ENCODE measurements at regions of chr1 and their contacts with region 1.

Region 1: DNA sequence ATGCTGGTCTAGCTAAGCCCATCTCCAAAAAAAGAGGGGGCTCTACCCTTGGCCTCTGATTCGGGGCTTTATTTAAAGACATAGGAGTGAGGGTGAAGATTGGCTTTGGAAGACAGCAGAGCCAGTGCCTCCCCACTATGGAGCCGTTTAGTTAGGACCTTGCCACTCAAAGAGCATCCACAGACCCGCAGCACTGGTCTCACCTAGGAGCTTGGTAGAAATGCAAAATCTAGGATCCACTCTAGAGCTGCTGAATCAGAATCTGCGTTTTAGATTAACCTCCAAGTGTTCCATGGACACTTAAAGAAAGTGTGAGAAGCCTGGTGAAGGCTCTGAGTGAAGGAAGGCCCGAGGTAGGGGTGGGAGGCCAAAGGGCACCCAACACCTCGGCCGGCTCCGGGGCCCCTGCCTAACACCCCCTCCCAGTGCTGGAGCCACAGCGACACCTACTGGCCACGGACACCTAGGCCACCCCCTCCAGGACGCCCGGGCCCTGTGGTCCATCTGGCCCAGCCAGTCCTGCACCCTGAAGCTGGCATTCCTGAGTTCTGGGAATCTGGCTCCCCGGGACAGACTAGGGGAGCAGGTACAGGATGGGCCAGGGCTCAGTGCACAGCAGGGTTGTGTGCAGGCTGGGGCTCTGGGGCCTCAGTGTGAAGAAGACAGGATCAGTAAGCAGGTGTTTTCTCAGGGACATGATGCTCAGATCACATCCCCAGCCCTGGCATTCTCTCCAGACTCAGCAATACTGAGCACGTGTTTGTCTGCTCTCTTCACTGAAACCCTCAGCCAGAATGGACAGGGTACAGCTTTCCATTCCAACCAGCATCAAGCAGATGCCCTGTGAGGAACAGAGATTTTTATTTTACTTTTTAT is 79.2 kb downstream of the TMEM53 start:
- DNase-seq: peak; percentile 77 to 88
- ATAC-seq: peak; percentile 92 to 95 (median 94)
- H3K4me3 ChIP-seq: no peak overlapping the region
- H3K27ac ChIP-seq: no peak overlapping the region
- H3K4me1 ChIP-seq: no peaks in the 10 kb centered on the region
- H3K27me3 ChIP-seq: peaks cover 0 to 21% (median 4%) of the 10 kb centered on the region in 7 donors
- CTCF ChIP-seq: peak; percentile 92 to 99 (median 98)

Region 2: DNA sequence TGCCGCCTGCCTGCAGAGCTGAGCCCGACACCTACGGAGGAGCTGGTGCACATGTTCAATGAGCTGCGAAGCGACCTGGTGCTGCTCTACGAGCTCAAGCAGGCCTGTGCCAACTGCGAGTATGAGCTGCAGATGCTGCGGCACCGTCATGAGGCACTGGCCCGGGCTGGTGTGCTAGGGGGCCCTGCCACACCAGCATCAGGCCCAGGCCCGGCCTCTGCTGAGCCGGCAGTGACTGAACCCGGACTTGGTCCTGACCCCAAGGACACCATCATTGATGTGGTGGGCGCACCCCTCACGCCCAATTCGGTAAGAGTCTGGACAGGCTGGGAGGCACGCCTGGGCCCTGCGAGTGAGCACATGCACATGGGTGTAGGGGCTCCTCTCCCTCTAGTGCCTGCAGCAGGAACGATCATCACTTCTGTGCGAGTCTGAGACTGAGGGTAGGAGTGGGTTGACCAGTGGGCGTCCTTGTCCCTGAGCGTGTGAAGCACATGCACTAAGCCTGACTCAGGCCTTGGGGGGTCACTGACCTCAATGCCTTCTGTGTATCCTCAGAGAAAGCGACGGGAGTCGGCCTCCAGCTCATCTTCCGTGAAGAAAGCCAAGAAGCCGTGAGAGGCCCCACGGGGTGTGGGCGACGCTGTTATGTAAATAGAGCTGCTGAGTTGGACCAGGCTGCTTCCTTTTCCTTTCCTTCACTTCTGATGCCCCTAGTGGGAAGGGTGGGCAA is 374.9 kb before region 1 on chr1:
- intact Hi-C with region 1: loop called (anchors 2 to 10 kb)
- DNase-seq: no peak
- ATAC-seq: no peak
- H3K4me3 ChIP-seq: no peak overlapping the region
- H3K27ac ChIP-seq: no peak overlapping the region
- H3K4me1 ChIP-seq: peaks cover 0 to 10% (median 0%) of the 10 kb centered on the region in 9 donors
- H3K27me3 ChIP-seq: no peaks in the 10 kb centered on the region
- CTCF ChIP-seq: no peak

Region 3: GRCh38 chr1:44377925-44378784 is 217.0 kb before region 1 on chr1:
- intact Hi-C with region 1: loop called (anchors 1 to 5 kb)
- DNase-seq: peak; percentile 15 to 51
- ATAC-seq: peak in 6 of 8 donors; percentile 25 to 62 (median 46)
- H3K4me3 ChIP-seq: no peak overlapping the region
- H3K27ac ChIP-seq: no peak overlapping the region
- H3K4me1 ChIP-seq: no peaks in the 10 kb centered on the region
- H3K27me3 ChIP-seq: no peaks in the 10 kb centered on the region
- CTCF ChIP-seq: peak; percentile 63 to 85 (median 79)

Measured in heart right ventricle (tissue), 16 donors.